MCF 10A (cell line): ENCODE measurements at regions of chr4 and their contacts with region 1.

Region 1: DNA sequence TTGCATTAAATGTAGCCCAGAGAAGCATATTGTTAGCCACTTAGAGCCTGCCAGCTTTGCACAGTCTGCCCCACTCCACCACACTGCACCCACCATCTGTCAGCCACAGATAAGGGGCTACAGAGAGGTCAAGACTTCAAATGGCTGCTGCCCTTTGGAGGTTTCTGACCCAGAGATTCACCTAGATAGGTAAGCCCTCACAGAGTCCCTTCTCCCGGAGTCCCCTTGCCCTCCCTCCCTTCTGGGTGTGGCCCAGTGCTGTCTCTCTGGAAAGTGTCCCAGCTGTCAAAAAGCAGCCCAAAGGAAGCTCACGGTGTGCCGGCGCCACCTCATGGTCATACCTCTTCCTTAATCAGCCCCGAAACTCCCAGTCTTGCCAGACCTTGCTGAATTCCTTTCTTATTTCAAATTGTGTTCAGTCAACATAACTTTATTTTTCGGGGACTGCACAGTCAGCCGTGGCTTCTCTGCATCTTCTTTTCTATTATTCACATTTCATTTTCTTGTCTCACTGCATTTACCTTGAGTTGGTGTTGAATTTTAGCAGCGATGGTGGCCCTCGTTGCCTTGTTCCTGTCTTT is 14.1 kb upstream of the GRPEL1 start:
- DNase-seq: peak; percentile 80
- H3K4me3 Mint-ChIP-seq: no peak overlapping the region
- H3K27ac Mint-ChIP-seq: no peak overlapping the region
- H3K4me1 Mint-ChIP-seq: peaks cover 7% of the 10 kb centered on the region
- H3K27me3 Mint-ChIP-seq: peaks cover 17% of the 10 kb centered on the region
- CTCF ChIP-seq: peak; percentile 57

Region 2: GRCh38 chr4:6264225-6264540 is 817.8 kb before region 1 on chr4:
- CTCF ChIA-PET with region 1: no interaction called
- POLR2A ChIA-PET with region 1: no interaction called
- intact Hi-C with region 1: loop called (anchors 5 kb)
- DNase-seq: peak; percentile 47
- H3K4me3 Mint-ChIP-seq: no peak overlapping the region
- H3K27ac Mint-ChIP-seq: no peak overlapping the region
- H3K4me1 Mint-ChIP-seq: peaks cover 22% of the 10 kb centered on the region
- H3K27me3 Mint-ChIP-seq: peaks cover 17% of the 10 kb centered on the region
- CTCF ChIP-seq: peak; percentile 31

Region 3: GRCh38 chr4:6343950-6344408 is 738.0 kb before region 1 on chr4:
- CTCF ChIA-PET with region 1: interaction called, 5 read pairs
- POLR2A ChIA-PET with region 1: no interaction called
- intact Hi-C with region 1: loop called (anchors 5 kb)
- DNase-seq: peak; percentile 84
- H3K4me3 Mint-ChIP-seq: peak overlapping the region; percentile 19
- H3K27ac Mint-ChIP-seq: peak overlapping the region; percentile 39
- H3K4me1 Mint-ChIP-seq: peaks cover 8% of the 10 kb centered on the region
- H3K27me3 Mint-ChIP-seq: peaks cover 1% of the 10 kb centered on the region
- CTCF ChIP-seq: peak; percentile 43

Region 4: DNA sequence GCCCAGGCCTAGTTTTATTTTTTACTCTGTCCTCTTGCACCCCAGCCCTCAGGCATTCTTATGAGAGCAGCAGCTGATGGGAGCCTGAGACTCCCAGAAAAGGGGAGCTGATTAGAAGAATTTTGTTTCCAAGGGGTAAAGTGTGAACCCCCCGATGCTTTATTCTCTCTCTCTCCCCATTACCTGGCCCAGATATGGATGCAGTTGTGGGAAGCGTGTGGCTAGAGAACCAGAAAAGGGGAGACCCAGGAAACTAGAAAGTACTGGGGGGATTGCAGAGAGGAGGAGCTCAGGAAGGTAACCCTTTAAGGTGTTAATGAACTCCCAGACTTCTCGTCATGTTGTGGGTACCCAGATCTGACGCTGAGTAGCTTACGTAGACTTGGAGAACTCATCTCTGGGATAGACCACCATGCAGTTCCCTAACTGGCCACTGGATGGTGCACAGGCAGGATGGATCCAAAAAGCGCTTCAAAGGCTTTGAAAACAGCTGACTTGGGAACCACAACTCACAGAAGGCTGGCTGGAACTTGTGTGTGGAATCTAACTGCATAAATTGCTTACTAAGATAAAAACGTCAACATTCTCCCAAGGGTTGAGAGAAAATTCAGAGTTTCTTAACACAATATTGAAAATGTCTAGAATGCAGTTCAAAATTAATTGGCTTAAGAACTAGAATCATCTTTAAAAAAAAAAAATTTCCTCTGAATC is 107.7 kb before region 1 on chr4:
- CTCF ChIA-PET with region 1: interaction called, 12 read pairs
- POLR2A ChIA-PET with region 1: no interaction called
- intact Hi-C with region 1: no loop called
- DNase-seq: peak; percentile 87
- H3K4me3 Mint-ChIP-seq: no peak overlapping the region
- H3K27ac Mint-ChIP-seq: no peak overlapping the region
- H3K4me1 Mint-ChIP-seq: no peaks in the 10 kb centered on the region
- H3K27me3 Mint-ChIP-seq: no peaks in the 10 kb centered on the region
- CTCF ChIP-seq: peak; percentile 95

Region 5: DNA sequence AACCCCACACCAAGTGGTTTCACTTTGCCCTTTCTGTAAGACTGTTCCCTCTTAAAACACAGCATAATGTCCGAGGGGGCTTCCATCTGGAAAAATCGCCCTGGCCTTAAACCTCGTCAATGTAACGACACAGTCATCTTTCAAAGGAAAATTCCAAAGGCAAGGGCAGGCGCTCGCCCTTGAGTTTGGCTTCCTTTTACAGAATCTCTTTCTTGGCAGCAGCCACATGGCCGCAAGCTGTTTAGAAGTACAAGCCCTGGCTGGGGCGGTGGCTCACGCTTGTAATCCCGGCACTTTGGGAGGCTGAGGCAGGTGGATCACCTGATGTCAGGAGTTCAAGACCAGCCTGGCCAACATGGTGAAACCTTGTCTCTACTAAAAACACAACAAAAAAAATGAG is 12.9 kb after region 1 on chr4:
- CTCF ChIA-PET with region 1: interaction called, 11 read pairs
- POLR2A ChIA-PET with region 1: interaction called, 5 read pairs
- intact Hi-C with region 1: no loop called
- DNase-seq: no peak
- H3K4me3 Mint-ChIP-seq: no peak overlapping the region
- H3K27ac Mint-ChIP-seq: no peak overlapping the region
- H3K4me1 Mint-ChIP-seq: no peaks in the 10 kb centered on the region
- H3K27me3 Mint-ChIP-seq: peaks cover 32% of the 10 kb centered on the region
- CTCF ChIP-seq: no peak

Region 6: GRCh38 chr4:7101692-7102515 is 19.9 kb after region 1 on chr4:
- CTCF ChIA-PET with region 1: interaction called, 15 read pairs
- POLR2A ChIA-PET with region 1: interaction called, 3 read pairs
- intact Hi-C with region 1: no loop called
- DNase-seq: peak; percentile 64
- H3K4me3 Mint-ChIP-seq: peak overlapping the region; percentile 72
- H3K27ac Mint-ChIP-seq: no peak overlapping the region
- H3K4me1 Mint-ChIP-seq: peaks cover 6% of the 10 kb centered on the region
- H3K27me3 Mint-ChIP-seq: peaks cover 19% of the 10 kb centered on the region
- CTCF ChIP-seq: peak; percentile 57